ENCODE measurements at regions of chr4 and their contacts with region 1.

Region 1: DNA sequence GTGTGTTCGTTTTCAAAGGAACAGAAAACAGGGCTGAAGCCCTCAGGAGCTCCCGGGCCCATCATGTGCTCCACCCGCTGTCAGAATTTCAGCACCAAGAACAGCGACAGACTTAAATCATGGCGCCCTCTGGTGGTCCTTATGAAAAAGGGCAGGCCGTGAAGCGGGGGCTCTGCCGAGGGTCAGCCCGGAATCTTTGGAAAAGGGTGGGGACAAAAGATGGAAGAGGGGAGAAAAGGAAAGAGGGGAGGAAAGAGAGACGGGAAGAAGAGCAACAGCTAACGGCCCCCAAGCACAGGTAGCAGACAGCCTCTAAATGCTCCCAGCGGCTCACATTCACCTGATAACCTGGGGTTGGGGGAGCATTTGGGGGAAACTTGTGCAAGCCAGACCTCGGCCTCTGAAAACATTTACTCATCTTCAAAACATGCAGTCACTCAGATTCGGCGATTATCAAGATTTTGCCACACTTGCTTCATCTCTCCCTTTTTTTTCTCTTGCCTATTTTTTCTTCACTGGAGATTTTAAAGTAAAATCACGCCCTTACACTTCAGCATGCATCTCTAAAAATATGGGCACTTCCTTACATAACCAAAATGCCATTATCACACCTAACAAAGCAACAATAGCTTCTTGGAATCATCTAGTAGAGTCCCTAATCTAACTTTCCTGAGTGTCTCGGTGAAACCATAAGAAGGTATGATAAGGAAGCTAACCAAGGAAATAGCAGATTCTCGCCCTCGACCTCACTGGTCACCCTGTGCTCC is 28.1 kb upstream of the MAN2B2 start:
- DNase-seq: peak; percentile 59
- ATAC-seq: peak; percentile 76
- H3K4me3 Mint-ChIP-seq: no peak overlapping the region
- H3K27ac Mint-ChIP-seq: no peak overlapping the region
- H3K4me1 Mint-ChIP-seq: no peaks in the 10 kb centered on the region
- H3K27me3 Mint-ChIP-seq: peaks cover 11% of the 10 kb centered on the region
- CTCF ChIP-seq: peak; percentile 96

Region 2: GRCh38 chr4:6369924-6370645 is 176.8 kb before region 1 on chr4:
- CTCF ChIA-PET with region 1: interaction called, 10 read pairs
- POLR2A ChIA-PET with region 1: no interaction called
- DNase-seq: peak; percentile 66
- ATAC-seq: peak; percentile 74
- H3K4me3 Mint-ChIP-seq: no peak overlapping the region
- H3K27ac Mint-ChIP-seq: no peak overlapping the region
- H3K4me1 Mint-ChIP-seq: peaks cover 18% of the 10 kb centered on the region
- H3K27me3 Mint-ChIP-seq: no peaks in the 10 kb centered on the region
- CTCF ChIP-seq: no peak

Region 3: DNA sequence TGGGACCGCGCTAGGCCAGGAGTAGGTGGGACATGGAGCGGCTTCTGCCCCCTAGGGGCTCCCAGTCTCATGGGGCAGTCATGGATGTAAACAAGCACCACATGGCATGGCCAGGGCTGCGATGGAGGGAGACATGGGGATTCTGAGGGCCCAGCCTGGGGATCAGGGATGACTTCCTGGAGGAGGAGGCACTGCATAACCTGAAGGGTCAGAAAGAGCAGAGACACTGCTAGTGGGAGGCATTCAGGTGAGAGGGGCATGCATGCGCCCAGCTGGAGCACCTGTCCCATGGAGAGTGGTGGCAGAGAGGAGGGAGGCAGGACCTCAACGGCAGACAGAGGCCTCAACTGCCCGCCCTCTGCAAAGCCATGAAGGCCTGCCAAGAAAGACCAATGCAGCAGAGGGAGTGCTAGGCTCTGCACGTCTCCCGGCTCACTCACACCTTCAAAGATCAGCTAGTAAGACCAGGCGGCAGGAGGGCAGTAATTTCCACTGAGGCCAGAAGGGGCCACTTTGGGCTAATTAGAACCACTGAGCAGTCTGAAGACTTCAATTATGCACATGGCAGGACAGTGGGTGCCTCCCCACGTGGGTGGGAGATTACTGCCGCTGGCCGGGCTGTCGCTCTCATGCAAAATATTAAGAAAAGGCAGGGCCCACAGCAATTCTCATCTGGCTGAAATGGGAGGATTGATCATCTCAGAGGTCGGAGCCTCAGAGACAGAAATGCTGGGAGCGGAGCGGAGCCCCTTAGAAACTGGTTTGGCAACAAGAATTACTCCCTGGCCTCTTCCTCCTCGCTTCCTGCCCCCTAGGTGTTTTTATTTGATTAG is 144.1 kb before region 1 on chr4:
- CTCF ChIA-PET with region 1: interaction called, 14 read pairs
- POLR2A ChIA-PET with region 1: no interaction called
- DNase-seq: no peak
- ATAC-seq: peak; percentile 83
- H3K4me3 Mint-ChIP-seq: no peak overlapping the region
- H3K27ac Mint-ChIP-seq: no peak overlapping the region
- H3K4me1 Mint-ChIP-seq: peaks cover 41% of the 10 kb centered on the region
- H3K27me3 Mint-ChIP-seq: no peaks in the 10 kb centered on the region; the same call in 1 of the 2 replicates
- CTCF ChIP-seq: no peak

Region 4: DNA sequence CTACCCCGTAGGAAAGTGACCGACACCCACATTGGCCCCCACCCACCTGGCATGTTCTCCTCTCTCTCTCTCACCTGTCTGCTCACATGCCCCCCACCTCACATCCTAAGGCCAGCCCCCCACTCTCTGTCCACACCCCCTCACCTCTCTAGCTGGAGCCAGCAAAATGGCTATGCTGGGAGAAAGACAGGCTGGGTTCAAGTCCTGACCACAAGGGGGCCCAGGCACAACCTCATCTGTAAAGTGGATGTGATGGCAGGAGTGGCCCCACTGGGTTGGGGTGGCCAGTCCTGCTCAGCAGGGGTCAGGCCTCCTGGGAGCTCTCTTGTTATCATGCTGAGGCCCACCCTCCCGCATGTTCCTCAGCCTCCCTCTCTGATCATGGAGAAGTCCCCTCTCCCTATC is 72.8 kb before region 1 on chr4:
- CTCF ChIA-PET with region 1: interaction called, 35 read pairs
- POLR2A ChIA-PET with region 1: no interaction called
- DNase-seq: peak; percentile 54
- ATAC-seq: no peak
- H3K4me3 Mint-ChIP-seq: 0 out of 2 replicates have a peak overlapping the region, but pooled peaks have one; percentile 6
- H3K27ac Mint-ChIP-seq: no peak overlapping the region
- H3K4me1 Mint-ChIP-seq: peaks cover 23% of the 10 kb centered on the region
- H3K27me3 Mint-ChIP-seq: peaks cover 51% of the 10 kb centered on the region
- CTCF ChIP-seq: 0 out of 2 replicates have a peak, but pooled peaks have one; percentile 28

Region 5: DNA sequence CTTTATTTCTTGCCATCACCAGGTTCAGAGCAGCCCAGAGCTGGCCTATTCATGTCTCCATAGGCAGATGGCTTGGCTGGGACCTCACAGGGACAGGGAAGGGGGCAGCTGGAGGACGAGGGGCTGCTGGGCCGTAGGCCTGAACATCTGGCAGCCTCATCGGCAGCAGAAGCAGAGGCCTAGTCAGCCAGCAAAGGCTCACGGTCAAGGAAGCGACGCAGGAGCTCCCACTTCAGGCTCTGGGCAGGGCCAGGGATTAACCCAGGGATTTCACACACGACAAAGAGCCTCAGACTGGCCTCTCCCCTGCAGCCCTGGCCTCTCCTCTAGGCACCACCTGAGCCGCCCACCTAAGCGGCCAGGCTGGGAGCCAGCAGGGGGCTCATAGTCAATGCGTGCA is 17.8 kb before region 1 on chr4:
- CTCF ChIA-PET with region 1: interaction called, 20 read pairs
- POLR2A ChIA-PET with region 1: no interaction called
- DNase-seq: no peak
- ATAC-seq: no peak
- H3K4me3 Mint-ChIP-seq: no peak overlapping the region
- H3K27ac Mint-ChIP-seq: no peak overlapping the region
- H3K4me1 Mint-ChIP-seq: peaks cover 26% of the 10 kb centered on the region
- H3K27me3 Mint-ChIP-seq: no peaks in the 10 kb centered on the region; the same call in 1 of the 2 replicates
- CTCF ChIP-seq: no peak

Region 6: GRCh38 chr4:6562931-6563901 is 16.4 kb after region 1 on chr4:
- CTCF ChIA-PET with region 1: interaction called, 27 read pairs
- POLR2A ChIA-PET with region 1: no interaction called
- DNase-seq: peak; percentile 42
- ATAC-seq: peak; percentile 60
- H3K4me3 Mint-ChIP-seq: peak overlapping the region; percentile 54
- H3K27ac Mint-ChIP-seq: no peak overlapping the region
- H3K4me1 Mint-ChIP-seq: peaks cover 2% of the 10 kb centered on the region; the same call in 1 of the 2 replicates
- H3K27me3 Mint-ChIP-seq: peaks cover 91% of the 10 kb centered on the region
- CTCF ChIP-seq: no peak

Region 7: GRCh38 chr4:6663596-6664393 is 116.9 kb after region 1 on chr4:
- CTCF ChIA-PET with region 1: interaction called, 12 read pairs
- POLR2A ChIA-PET with region 1: no interaction called
- DNase-seq: peak; percentile 34
- ATAC-seq: peak; percentile 49
- H3K4me3 Mint-ChIP-seq: peak overlapping the region; percentile 45
- H3K27ac Mint-ChIP-seq: no peak overlapping the region
- H3K4me1 Mint-ChIP-seq: no peaks in the 10 kb centered on the region
- H3K27me3 Mint-ChIP-seq: peaks cover 57% of the 10 kb centered on the region
- CTCF ChIP-seq: no peak

Measured in WTC11 (cell line).